Activated naive CD4-positive, alpha-beta T cell treated with anti-CD3 and anti-CD28 coated beads for 36 hours (primary cell): ENCODE measurements at regions of chr11 and their contacts with region 1.

Region 1: DNA sequence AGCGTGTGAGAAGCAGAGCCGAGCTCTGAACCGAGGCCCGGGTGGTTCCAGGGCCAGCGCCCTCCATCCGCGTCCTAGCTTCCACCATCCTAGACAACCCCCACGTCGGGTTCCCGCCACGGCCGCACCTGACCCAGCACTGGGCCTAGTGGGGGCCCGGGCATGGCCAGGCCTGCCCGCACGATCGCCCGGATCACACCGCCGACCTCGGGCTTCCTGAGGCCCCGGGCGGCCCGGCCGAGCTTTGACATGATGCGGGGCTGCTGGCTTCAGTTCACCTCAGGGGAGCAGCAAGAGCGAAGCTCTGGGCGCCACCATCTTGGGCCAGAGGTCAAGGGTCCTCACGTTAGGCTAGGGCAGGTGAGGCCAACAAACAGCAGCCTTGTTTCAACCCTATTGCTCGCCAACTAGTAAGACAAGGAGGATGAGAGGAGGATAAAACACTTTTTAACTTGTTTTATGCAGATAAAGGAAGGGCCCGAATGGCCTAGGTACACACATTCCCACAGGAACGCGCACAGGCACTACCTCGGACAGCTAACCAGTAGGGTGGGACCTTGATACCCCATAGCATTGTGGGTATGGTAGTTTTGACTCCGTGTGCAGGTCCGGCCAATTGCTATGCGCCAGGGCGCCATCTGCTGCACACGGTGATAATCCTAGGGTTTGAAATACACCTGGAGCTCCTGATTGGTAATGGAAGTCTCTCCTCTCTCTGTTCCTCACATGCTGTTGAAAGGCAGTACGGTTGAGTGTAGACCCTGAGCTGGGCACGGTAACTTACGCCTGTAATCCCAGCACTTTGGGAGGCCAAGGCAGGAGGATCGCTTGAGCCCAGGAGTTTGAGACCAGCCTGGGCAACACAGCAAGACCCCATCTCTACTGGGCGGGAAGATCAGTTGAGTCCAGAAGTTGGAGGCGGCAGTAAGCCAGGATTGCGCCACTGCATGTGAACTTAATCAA is at the start of gene MRPL11:
- DNase-seq: peak; percentile 95
- H3K4me3 Mint-ChIP-seq: peak within 1 kb of the TSS; percentile 89
- H3K27ac Mint-ChIP-seq: peak within 1 kb of the TSS; percentile 99
- H3K4me1 Mint-ChIP-seq: peaks cover 12% of the 10 kb centered on the region
- H3K27me3 Mint-ChIP-seq: no peaks in the 10 kb centered on the region
- total RNA-seq, gene MRPL11: 143 to 144 TPM

Region 2: DNA sequence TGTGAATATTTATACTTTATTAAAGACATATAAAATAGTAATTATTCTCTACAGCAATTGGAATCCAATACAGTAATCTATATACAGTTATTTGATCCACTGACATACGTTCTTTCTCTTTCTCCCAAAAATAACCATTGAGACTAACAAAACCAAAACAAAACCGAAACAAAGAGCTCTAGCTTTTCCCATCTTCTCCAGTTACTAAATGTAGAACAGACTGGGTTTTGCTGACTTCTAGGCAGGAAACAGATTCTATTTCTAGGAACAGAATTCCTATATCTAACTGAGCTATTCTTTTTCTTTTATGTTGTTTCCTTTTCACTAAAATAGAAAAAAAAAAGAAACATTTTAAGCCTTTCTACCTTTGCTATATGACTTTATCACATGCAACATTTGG is 288.6 kb before region 1 on chr11:
- CTCF ChIA-PET with region 1: no interaction called
- intact Hi-C with region 1: no loop called
- DNase-seq: no peak
- H3K4me3 Mint-ChIP-seq: no peak overlapping the region
- H3K27ac Mint-ChIP-seq: no peak overlapping the region
- H3K4me1 Mint-ChIP-seq: peaks cover 51% of the 10 kb centered on the region
- H3K27me3 Mint-ChIP-seq: no peaks in the 10 kb centered on the region

Region 3: GRCh38 chr11:66222358-66223149 is 216.2 kb before region 1 on chr11:
- CTCF ChIA-PET with region 1: interaction called, 4 read pairs
- intact Hi-C with region 1: loop called (anchors 2 kb)
- DNase-seq: peak; percentile 98
- H3K4me3 Mint-ChIP-seq: peak overlapping the region; percentile 33
- H3K27ac Mint-ChIP-seq: peak overlapping the region; percentile 99
- H3K4me1 Mint-ChIP-seq: peaks cover 23% of the 10 kb centered on the region
- H3K27me3 Mint-ChIP-seq: no peaks in the 10 kb centered on the region

Region 4: DNA sequence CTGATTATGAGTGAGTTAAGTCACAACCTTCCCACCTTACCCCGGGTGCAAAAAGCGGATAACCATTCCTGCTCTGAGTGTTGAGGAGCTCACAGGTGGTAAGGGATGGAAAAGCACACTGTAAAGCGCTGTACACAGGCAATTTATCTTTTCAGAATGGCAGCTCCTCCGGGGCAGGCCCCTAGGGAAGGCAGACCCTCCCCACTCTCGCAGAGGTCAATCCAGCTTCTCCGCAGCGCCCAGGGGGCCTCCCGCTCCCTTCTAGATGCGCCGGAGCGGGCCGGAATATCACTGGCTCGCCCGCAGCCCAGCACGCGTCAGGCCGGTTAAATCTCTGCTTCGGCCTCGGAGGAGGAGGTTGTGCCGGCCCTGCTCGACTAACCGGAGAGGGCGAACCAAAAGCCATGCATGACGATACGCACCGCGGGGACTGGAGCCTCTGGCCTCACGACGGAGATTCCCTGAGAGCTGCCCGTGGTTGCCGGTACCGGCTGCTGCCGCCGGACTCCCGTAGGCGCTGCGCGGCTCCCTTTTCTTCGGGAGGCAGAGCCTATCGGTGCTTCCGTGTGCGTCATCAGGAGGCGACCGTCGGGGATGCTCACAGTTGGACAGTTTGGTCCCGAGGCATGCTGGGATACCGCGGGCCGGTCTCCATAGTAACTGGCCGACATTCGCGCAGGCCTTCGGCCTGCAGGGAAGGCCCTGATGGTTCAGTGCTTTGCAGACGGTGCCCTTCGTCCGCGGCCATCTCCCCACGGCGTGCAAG is 94.1 kb before region 1 on chr11 and contains the start of gene BRMS1:
- CTCF ChIA-PET with region 1: no interaction called
- intact Hi-C with region 1: loop called (anchors 5 kb)
- DNase-seq: peak; percentile 99
- H3K4me3 Mint-ChIP-seq: peak within 1 kb of the TSS; percentile 93
- H3K27ac Mint-ChIP-seq: peak within 1 kb of the TSS; percentile 85
- H3K4me1 Mint-ChIP-seq: peaks cover 42% of the 10 kb centered on the region
- H3K27me3 Mint-ChIP-seq: peaks cover 3% of the 10 kb centered on the region
- total RNA-seq, gene BRMS1: 24.0 to 25.3 TPM

Region 5: DNA sequence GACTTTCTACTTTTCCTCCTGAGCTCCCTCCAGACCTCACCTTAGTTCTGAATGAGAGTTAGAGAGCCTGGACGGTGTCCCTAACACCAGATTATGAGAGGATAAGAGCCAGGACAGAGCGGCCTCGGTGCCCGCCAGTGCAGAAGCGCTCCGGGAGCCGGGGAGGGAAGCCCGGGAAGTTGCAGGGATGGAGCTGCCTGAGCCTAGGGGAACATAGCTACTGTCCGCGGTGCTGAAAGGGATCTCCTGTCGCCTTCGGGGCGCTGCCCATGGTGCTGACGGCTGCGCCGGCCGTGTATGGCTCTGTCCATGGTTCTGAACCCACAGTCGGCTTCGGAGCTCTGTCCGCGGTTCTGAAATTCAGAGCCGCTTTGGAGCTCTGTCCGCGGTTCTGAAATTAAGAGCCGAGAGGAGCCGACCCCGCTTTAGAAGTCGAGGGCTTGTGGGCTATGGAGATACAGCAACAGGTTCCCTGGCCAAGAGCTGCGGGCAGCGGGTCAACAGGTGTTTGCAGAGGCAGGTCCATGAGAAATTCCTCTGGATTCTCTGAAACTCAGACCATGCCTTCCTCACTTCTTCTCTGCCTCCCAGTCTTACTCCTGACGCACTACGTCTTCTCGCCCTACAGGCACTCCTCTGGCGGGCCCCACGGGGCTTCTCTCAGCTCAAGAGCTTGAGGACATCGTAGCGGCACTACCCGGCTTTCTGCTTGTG is 17.1 kb before region 1 on chr11:
- CTCF ChIA-PET with region 1: interaction called, 12 read pairs
- intact Hi-C with region 1: loop called (anchors 1 kb)
- DNase-seq: peak; percentile 93
- H3K4me3 Mint-ChIP-seq: no peak overlapping the region
- H3K27ac Mint-ChIP-seq: no peak overlapping the region
- H3K4me1 Mint-ChIP-seq: peaks cover 28% of the 10 kb centered on the region
- H3K27me3 Mint-ChIP-seq: peaks cover 32% of the 10 kb centered on the region

Region 6: DNA sequence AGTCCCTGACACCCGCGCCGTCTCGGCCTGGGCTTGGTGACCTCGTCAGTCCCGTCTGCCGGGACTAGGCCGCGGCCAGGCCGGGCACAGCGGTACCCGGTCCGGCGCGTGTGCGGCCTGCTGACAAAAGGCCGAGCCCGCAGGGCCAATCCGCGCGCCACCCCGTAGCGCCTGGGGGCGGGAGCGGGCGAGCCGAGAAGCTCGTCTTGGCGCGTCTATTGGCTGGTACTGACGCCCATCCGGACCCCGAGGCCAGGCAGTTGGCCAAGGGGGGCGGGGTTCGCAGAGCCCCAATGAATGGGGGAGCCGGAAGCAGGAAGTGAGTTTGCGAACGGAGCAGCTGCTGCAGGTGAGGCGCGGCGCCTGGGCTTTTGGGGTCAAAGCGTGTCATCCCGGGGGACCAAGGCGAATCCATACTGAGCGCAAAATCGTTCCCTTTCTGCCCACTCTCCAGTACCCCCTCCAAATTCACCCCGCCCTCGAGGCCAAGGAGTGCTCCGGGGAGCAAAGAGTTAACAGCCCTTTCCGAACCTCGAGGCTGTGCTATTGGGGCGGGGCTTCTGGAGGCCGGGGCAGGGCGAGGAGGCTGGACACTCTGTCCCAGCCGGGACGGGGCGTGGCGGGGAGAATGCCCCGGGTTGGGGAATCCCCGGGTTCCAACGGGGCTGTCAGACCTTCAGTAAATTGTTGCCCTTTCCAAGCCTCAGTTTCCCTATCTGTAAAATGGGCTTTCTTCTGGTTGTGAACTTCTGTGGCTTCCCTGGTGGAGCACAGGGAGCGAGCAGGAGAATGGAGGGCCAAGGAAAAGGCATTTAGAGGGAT is 41.5 kb after region 1 on chr11 and contains the start of gene DPP3:
- CTCF ChIA-PET with region 1: interaction called, 11 read pairs
- intact Hi-C with region 1: loop called (anchors 1 kb)
- DNase-seq: peak; percentile 97
- H3K4me3 Mint-ChIP-seq: peak within 1 kb of the TSS; percentile 89
- H3K27ac Mint-ChIP-seq: peak within 1 kb of the TSS; percentile 84
- H3K4me1 Mint-ChIP-seq: peaks cover 25% of the 10 kb centered on the region
- H3K27me3 Mint-ChIP-seq: no peaks in the 10 kb centered on the region
- total RNA-seq, gene DPP3: 73.8 to 80.1 TPM